Left cardiac atrium (tissue), 4 donors: ENCODE measurements at regions of chr5 and their contacts with region 1.

Region 1: GRCh38 chr5:150560401-150561193 is 52.7 kb downstream of the NDST1 start:
- DNase-seq: peak; percentile 84
- ATAC-seq: peak; percentile 89 to 92

Region 2: GRCh38 chr5:150656191-150657132 is 95.9 kb after region 1 on chr5:
- intact Hi-C with region 1: loop called (anchors 1 to 5 kb)
- DNase-seq: peak; percentile 76
- ATAC-seq: peak; percentile 61 to 80

Region 3: GRCh38 chr5:150694612-150695011 is 134.0 kb after region 1 on chr5:
- intact Hi-C with region 1: loop called in 1 of 2 experiments (anchors 5 kb)
- DNase-seq: no peak
- ATAC-seq: peak; percentile 15 to 90

Region 4: DNA sequence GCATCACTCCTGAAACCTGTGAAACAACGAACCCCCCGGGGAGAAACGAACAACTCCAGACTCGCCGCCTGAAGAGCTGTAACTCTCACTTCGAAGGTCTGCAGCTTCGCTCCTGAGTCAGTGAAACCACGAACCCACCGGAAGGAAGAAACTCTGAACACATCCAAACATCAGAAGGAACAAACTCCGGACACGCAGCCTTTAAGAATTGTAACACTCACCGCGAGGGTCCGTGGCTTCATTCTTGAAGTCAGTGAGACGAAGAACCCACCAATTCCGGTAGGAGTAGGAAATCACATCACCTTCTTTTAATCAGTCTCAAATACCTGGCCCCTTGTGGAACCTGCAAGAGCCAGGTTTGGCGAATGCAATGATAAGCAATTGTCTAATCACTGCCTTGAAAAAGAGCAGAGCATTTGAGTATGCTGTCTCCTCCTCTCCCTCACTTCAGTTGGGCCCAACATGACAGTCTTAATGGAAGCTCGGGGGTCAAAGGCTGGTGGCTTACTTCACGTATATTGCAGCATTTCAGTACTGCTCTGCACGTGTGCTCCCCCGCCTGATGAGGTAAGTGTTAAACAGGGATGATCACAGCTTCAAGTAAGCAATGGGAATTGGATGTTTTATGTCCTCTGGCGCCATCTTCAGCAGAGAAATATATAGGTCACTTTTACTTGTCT is 286.2 kb after region 1 on chr5:
- intact Hi-C with region 1: loop called (anchors 5 to 10 kb)
- DNase-seq: peak; percentile 45
- ATAC-seq: peak; percentile 94 to 97